H1 (cell line): ENCODE measurements at regions of chr17 and their contacts with region 1.

Region 1: DNA sequence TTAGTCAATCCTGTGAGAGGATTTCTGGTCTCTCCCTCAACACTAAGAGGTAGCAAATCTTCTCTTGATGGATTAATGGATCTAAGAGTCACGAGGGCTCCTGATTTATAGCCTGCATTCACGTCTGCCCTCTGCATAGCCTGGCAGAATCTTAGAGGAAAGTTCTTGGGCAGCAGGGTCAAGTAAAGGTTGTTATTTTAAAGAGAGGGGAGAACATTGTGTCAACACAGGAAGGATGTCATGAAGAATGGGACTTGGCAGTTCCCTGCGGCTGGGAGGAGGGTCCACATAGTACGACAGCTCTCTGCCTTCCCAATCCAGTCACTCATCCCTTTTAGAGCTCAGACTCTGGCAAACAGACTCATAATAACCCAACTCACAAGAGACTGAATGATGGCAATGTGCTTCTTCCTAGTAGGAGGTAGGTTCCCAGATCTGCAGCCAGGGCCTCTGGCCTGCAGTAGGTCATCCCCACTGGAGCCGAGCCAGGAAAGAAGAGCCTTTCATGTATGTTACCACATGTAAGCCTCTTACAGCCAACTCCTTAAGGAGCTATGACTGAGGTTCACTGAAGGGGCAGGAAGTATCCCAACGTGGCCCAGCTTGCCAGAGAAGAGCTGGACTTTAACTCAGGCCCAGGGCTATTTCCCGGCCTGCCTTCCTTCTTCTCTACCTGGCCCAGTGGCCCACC is 25.4 kb upstream of the RPTOR start:
- DNase-seq: no peak
- H3K4me3 ChIP-seq: no peak overlapping the region
- H3K27ac ChIP-seq: no peak overlapping the region
- H3K4me1 ChIP-seq: peaks cover 0 to 3% (median under 1%) of the 10 kb centered on the region in 4 experiments; a peak in 2 of 7 replicates
- H3K27me3 ChIP-seq: peaks cover 0 to 2% (median 0%) of the 10 kb centered on the region in 4 experiments; a peak in 2 of 7 replicates
- CTCF ChIP-seq: no peak
- EP300 ChIP-seq: no peak
- POLR2A ChIP-seq: no peak
- RAD21 ChIP-seq: no peak

Region 2: DNA sequence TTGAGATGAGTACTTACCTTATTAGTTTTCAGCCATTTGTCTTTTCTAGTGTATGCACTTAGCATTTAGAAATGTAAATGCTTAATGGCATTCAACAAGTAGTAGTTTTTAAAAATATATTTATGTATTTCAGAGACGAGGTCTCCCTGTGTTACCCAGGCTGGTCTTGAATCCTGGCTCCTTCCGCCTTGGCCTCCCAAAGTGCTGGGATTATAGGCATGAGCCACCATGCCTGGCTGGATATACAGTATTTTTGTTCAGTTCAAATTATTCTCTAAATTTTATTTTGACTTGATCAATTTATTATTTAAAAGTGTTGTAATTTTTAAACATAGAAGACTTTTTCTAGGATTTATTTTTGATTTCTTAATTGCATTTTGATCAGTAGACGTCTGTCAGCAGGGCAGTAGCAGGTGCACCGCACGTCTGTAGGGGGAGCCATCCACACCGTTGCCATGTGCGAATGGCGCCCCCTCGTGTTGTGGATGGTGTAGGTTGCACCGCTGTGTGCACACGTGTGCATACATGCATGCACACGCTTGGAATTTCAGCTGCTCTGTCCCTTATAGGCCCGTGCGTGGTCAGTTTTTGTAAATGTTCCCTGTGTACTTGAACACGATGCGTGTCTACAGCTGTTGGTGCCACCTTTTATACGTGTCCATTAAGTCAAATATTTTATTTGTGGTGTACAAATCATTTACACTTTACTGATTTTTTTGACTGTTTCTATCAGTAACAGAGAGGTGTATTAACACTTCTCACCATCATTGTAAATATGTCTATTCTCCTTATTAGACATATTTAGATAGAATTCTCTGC is 56.0 kb after region 1 on chr17:
- CTCF ChIA-PET with region 1: interaction called, 16 read pairs
- POLR2A ChIA-PET with region 1: no interaction called
- DNase-seq: peak; percentile 58 to 95
- H3K4me3 ChIP-seq: no peak overlapping the region
- H3K27ac ChIP-seq: no peak overlapping the region
- H3K4me1 ChIP-seq: no peaks in the 10 kb centered on the region; a peak in 1 of 7 replicates
- H3K27me3 ChIP-seq: no peaks in the 10 kb centered on the region
- CTCF ChIP-seq: peak; percentile 100
- EP300 ChIP-seq: no peak
- POLR2A ChIP-seq: no peak
- RAD21 ChIP-seq: peak; percentile 91